Activated CD4-positive, alpha-beta memory T cell treated with anti-CD3 and anti-CD28 coated beads for 36 hours (primary cell): ENCODE measurements at regions of chr2 and their contacts with region 1.

Region 1: DNA sequence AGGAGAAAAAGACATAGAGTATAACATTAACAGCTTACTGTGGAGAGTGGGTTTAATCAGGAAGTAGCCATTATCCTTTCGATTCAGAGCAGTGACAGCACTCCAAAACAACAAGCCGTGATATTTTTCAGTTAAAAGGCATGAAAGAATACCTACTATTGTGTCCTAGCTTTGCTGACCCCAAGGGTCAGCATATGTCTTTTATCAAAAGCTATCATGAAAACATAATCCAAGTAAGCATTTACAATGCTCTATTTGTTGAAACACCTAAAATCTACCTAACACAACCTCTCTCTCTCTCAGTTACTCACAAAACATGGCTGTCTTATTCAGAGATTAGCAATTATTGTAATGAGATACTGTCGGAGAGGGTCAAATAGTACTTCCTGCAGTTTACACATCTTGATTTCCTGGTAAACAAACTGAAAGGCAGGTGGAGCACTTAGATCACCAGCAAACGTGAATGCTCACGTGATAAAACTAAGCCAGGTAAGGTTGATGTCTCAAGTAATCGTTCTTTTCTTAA is 100.0 kb downstream of the BAZ2B start:
- DNase-seq: no peak
- H3K4me3 Mint-ChIP-seq: peak overlapping the region; percentile 69
- H3K27ac Mint-ChIP-seq: peak overlapping the region; percentile 59
- H3K4me1 Mint-ChIP-seq: peaks cover 27% of the 10 kb centered on the region
- H3K27me3 Mint-ChIP-seq: no peaks in the 10 kb centered on the region

Region 2: GRCh38 chr2:159286709-159287441 is 229.4 kb before region 1 on chr2:
- CTCF ChIA-PET with region 1: no interaction called
- POLR2A ChIA-PET with region 1: no interaction called
- intact Hi-C with region 1: loop called (anchors 2 kb)
- DNase-seq: peak; percentile 97
- H3K4me3 Mint-ChIP-seq: peak overlapping the region; percentile 87
- H3K27ac Mint-ChIP-seq: peak overlapping the region; percentile 63
- H3K4me1 Mint-ChIP-seq: peaks cover 20% of the 10 kb centered on the region
- H3K27me3 Mint-ChIP-seq: no peaks in the 10 kb centered on the region

Region 3: GRCh38 chr2:159459279-159459678 is 57.0 kb before region 1 on chr2:
- CTCF ChIA-PET with region 1: no interaction called
- POLR2A ChIA-PET with region 1: no interaction called
- intact Hi-C with region 1: no loop called
- DNase-seq: no peak
- H3K4me3 Mint-ChIP-seq: no peak overlapping the region
- H3K27ac Mint-ChIP-seq: no peak overlapping the region
- H3K4me1 Mint-ChIP-seq: peaks cover 23% of the 10 kb centered on the region
- H3K27me3 Mint-ChIP-seq: no peaks in the 10 kb centered on the region

Region 4: GRCh38 chr2:159497256-159497655 is 19.0 kb before region 1 on chr2:
- CTCF ChIA-PET with region 1: no interaction called
- POLR2A ChIA-PET with region 1: no interaction called
- intact Hi-C with region 1: loop called (anchors 2 kb)
- DNase-seq: no peak
- H3K4me3 Mint-ChIP-seq: no peak overlapping the region
- H3K27ac Mint-ChIP-seq: peak overlapping the region; percentile 21
- H3K4me1 Mint-ChIP-seq: peaks cover 11% of the 10 kb centered on the region
- H3K27me3 Mint-ChIP-seq: no peaks in the 10 kb centered on the region